ENCODE measurements at regions of chr4 and their contacts with region 1.

Region 1: DNA sequence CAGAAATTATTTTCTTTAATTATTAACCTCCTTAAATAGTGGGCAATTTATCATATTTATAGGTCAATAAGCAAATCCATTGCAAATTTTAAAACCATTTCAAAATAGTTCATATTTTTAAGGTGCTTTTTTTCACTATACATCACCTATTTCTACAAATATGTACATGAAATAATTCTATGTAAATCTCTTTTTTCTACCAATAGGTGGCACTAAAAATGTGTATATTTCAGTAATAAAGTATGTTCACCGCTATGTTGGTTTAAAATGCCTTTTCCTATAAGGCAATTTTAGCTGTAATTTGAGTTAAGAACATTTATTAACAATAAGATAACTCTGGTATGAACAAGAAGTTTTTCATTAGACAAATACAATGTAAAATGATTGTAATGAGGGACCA is 672.2 kb downstream of the KCTD8 start:
- DNase-seq: no peak
- H3K4me3 ChIP-seq: no peak overlapping the region
- H3K4me3 Mint-ChIP-seq: no peak overlapping the region
- H3K27ac Mint-ChIP-seq: no peak overlapping the region
- H3K4me1 ChIP-seq: no peaks in the 10 kb centered on the region
- H3K4me1 Mint-ChIP-seq: no peaks in the 10 kb centered on the region
- H3K27me3 ChIP-seq: no peaks in the 10 kb centered on the region
- H3K27me3 Mint-ChIP-seq: no peaks in the 10 kb centered on the region
- CTCF ChIP-seq: peak in 1 of 2 experiments; percentile 28

Region 2: DNA sequence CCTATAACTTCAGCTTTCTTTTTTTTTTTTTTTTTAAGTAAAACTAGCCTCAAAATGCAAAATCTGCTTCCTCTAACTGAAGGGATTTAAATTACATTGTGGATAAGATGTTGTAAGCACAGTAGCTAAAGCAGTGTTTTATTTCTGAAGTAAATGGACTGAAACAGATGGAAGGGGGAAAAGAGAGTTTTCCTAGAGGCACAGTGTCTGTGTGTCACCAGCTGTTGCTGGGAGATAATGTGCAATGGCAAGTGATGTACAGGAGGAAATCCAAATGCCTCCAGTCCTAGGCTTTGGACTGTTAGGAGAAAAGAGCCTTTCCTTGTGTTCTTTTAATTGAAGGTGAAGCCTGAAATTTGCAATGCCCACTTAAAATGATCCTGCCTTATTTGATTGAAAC is 211.8 kb before region 1 on chr4:
- CTCF ChIA-PET with region 1: no interaction called
- POLR2A ChIA-PET with region 1: no interaction called
- intact Hi-C with region 1: no loop called
- DNase-seq: no peak
- H3K4me3 ChIP-seq: no peak overlapping the region
- H3K4me3 Mint-ChIP-seq: no peak overlapping the region
- H3K27ac Mint-ChIP-seq: no peak overlapping the region
- H3K4me1 ChIP-seq: no peaks in the 10 kb centered on the region
- H3K4me1 Mint-ChIP-seq: no peaks in the 10 kb centered on the region
- H3K27me3 ChIP-seq: no peaks in the 10 kb centered on the region
- H3K27me3 Mint-ChIP-seq: no peaks in the 10 kb centered on the region
- CTCF ChIP-seq: no peak

Region 3: DNA sequence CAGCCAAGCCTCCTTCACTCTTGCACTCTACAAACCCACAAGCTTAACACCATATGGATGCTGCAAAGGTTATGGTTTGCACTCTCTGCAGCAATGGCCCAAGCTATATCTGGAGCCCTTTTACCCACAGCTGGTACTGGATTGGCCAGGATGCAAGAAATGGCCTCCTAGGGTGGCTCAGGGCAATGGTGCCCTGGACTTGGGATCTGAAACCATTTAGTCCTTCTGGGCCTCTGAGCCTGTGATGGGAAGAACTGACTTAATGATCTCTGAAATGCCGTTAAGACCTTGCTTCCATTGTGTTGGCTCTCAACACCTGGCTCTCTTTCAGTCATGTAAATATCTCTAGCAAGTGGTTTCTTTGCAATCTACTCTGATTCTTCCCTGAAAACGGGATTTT is 46.2 kb after region 1 on chr4:
- CTCF ChIA-PET with region 1: no interaction called
- POLR2A ChIA-PET with region 1: no interaction called
- intact Hi-C with region 1: no loop called
- DNase-seq: no peak
- H3K4me3 ChIP-seq: no peak overlapping the region
- H3K4me3 Mint-ChIP-seq: no peak overlapping the region
- H3K27ac Mint-ChIP-seq: no peak overlapping the region
- H3K4me1 ChIP-seq: no peaks in the 10 kb centered on the region
- H3K4me1 Mint-ChIP-seq: no peaks in the 10 kb centered on the region
- H3K27me3 ChIP-seq: no peaks in the 10 kb centered on the region
- H3K27me3 Mint-ChIP-seq: no peaks in the 10 kb centered on the region
- CTCF ChIP-seq: no peak

Region 4: DNA sequence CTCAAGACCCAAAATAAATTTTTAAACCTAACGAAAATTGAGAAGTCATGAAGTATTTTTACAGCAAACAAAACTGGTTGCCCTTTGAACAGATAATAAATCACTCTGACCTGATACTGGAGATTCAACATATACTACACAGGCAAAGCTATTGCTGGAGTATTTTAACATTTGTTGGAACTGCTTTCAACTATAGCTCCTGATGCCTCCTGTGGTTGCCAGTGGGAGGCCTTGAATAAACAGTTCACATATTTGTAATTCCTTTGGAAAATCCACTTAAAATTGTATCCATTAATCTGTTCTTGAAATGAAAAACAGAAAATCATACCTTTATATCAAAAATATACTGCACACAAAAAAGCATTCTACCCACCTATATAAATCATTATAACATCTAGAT is 67.1 kb after region 1 on chr4:
- CTCF ChIA-PET with region 1: interaction called, 4 read pairs
- POLR2A ChIA-PET with region 1: no interaction called
- intact Hi-C with region 1: loop called (anchors 1 kb)
- DNase-seq: peak; percentile 35 to 37
- H3K4me3 ChIP-seq: no peak overlapping the region
- H3K4me3 Mint-ChIP-seq: no peak overlapping the region
- H3K27ac Mint-ChIP-seq: no peak overlapping the region
- H3K4me1 ChIP-seq: peaks cover 19% of the 10 kb centered on the region
- H3K4me1 Mint-ChIP-seq: no peaks in the 10 kb centered on the region
- H3K27me3 ChIP-seq: no peaks in the 10 kb centered on the region
- H3K27me3 Mint-ChIP-seq: no peaks in the 10 kb centered on the region
- CTCF ChIP-seq: peak; percentile 28 to 57

Region 5: DNA sequence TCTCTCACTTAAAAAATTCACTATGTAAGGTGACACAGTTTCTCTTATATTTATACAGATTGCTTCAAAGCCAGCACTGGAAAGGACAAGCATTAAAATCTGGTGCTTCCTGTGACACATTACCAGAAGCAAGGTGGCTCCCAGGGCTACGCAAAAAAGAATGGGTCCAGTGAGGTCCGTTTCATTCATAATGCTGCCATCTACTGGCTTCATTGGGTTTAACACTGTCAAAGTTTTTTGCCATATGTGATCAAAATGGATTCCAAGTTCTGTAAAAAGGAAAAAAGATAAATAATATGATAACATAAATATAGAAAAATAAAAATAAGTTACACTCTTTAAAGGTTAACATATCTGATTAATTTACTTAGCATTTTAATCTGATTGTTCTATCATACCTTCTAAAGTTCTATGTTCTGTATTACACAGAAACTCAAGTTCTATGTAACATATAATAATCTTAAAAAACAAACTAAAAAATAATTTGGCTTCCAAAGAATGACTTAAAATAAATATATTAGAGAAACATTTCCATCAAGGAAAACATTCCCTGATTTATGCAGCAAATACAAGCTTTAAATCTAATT is 853.0 kb after region 1 on chr4:
- CTCF ChIA-PET with region 1: no interaction called
- POLR2A ChIA-PET with region 1: no interaction called
- intact Hi-C with region 1: loop called (anchors 2 kb)
- DNase-seq: peak; percentile 38 to 49
- H3K4me3 ChIP-seq: no peak overlapping the region
- H3K4me3 Mint-ChIP-seq: no peak overlapping the region
- H3K27ac Mint-ChIP-seq: no peak overlapping the region
- H3K4me1 ChIP-seq: no peaks in the 10 kb centered on the region
- H3K4me1 Mint-ChIP-seq: no peaks in the 10 kb centered on the region
- H3K27me3 ChIP-seq: no peaks in the 10 kb centered on the region; the same call in 1 of the 2 replicates
- H3K27me3 Mint-ChIP-seq: peaks cover 2% of the 10 kb centered on the region
- CTCF ChIP-seq: peak; percentile 55 to 67